ENCODE measurements at regions of chr17 and their contacts with region 1.

Region 1: GRCh38 chr17:50304781-50305404 is 30.6 kb downstream of the TMEM92 start:
- DNase-seq: no peak
- H3K4me3 Mint-ChIP-seq: peak overlapping the region; percentile 40
- H3K27ac Mint-ChIP-seq: peak overlapping the region; percentile 99
- H3K4me1 Mint-ChIP-seq: peaks cover 71% of the 10 kb centered on the region
- H3K27me3 Mint-ChIP-seq: no peaks in the 10 kb centered on the region

Region 2: GRCh38 chr17:50252781-50253180 is 52.1 kb before region 1 on chr17:
- intact Hi-C with region 1: no loop called
- DNase-seq: no peak
- H3K4me3 Mint-ChIP-seq: no peak overlapping the region
- H3K27ac Mint-ChIP-seq: no peak overlapping the region
- H3K4me1 Mint-ChIP-seq: no peaks in the 10 kb centered on the region
- H3K27me3 Mint-ChIP-seq: peaks cover 21% of the 10 kb centered on the region

Region 3: DNA sequence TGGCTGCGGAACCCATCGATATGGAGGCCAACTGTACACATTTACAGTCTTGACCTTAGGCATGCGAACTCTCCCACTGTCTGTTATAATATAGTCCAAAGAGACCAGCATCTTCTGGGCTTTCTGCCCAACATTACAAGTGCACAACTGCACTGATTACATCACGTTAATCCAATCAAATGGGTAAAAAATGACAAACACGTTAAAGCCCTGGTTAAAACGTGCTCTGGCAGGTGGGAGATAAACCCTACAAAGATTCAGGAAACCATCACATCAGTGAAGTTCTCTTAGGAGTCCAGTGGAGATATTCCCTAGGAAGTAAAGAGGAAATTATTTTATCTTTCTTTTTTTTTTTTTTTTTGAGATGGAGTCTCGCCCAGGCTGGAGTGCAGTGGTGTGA is 17.4 kb after region 1 on chr17:
- intact Hi-C with region 1: no loop called
- DNase-seq: no peak
- H3K4me3 Mint-ChIP-seq: no peak overlapping the region
- H3K27ac Mint-ChIP-seq: no peak overlapping the region
- H3K4me1 Mint-ChIP-seq: peaks cover 19% of the 10 kb centered on the region
- H3K27me3 Mint-ChIP-seq: no peaks in the 10 kb centered on the region

Region 4: GRCh38 chr17:50345432-50346312 is 40.8 kb after region 1 on chr17 and contains the start of gene XYLT2:
- intact Hi-C with region 1: loop called (anchors 5 kb)
- DNase-seq: peak; percentile 86
- H3K4me3 Mint-ChIP-seq: peak within 1 kb of the TSS; percentile 93
- H3K27ac Mint-ChIP-seq: peak within 1 kb of the TSS; percentile 96
- H3K4me1 Mint-ChIP-seq: peaks cover 34% of the 10 kb centered on the region
- H3K27me3 Mint-ChIP-seq: no peaks in the 10 kb centered on the region
- total RNA-seq, gene XYLT2: 134 and 143 TPM in 2 replicates

Region 5: GRCh38 chr17:50425682-50426471 is 121.0 kb after region 1 on chr17 and contains the start of gene ACSF2:
- intact Hi-C with region 1: no loop called
- DNase-seq: peak; percentile 64
- H3K4me3 Mint-ChIP-seq: peak within 1 kb of the TSS; percentile 89
- H3K27ac Mint-ChIP-seq: peak within 1 kb of the TSS; percentile 81
- H3K4me1 Mint-ChIP-seq: peaks cover 30% of the 10 kb centered on the region
- H3K27me3 Mint-ChIP-seq: no peaks in the 10 kb centered on the region
- total RNA-seq, gene ACSF2: 23.5 and 28.2 TPM in 2 replicates

Region 6: DNA sequence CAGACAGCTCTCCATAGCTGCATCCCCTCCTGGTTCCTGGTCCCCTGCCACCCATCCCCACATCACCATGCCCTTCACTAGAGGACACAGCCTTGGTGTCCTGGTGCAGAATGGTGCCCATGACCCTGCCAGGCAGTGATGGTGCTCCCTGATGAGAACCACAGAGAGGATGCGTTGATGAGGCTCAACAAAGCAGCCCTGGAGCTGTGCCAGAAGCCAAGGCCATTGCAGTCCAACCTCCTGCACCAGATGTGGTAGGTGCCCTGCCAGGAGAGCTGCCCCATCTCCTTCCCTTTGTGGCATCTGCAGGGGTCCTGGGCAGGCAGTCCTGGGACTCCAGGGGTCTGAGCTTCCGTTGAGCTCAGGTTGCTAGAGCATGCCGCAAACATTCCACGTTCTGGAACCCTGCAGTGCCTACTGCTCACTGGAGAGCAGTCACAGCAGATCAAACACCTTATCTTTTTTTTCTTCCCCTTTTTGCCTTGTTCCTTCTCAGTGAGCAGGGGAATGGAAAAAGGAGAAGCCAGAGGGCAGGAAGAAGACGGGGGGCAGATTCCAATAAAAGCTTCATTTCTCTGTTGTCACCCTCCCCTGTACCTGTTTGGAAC is 222.4 kb after region 1 on chr17:
- intact Hi-C with region 1: no loop called
- DNase-seq: no peak
- H3K4me3 Mint-ChIP-seq: no peak overlapping the region
- H3K27ac Mint-ChIP-seq: no peak overlapping the region
- H3K4me1 Mint-ChIP-seq: peaks cover 1% of the 10 kb centered on the region
- H3K27me3 Mint-ChIP-seq: peaks cover 17% of the 10 kb centered on the region